Activated B cell treated with CpG ODN at 0.5 μM for 24 hours (primary cell): ENCODE measurements at regions of chr16 and their contacts with region 1.

Region 1: DNA sequence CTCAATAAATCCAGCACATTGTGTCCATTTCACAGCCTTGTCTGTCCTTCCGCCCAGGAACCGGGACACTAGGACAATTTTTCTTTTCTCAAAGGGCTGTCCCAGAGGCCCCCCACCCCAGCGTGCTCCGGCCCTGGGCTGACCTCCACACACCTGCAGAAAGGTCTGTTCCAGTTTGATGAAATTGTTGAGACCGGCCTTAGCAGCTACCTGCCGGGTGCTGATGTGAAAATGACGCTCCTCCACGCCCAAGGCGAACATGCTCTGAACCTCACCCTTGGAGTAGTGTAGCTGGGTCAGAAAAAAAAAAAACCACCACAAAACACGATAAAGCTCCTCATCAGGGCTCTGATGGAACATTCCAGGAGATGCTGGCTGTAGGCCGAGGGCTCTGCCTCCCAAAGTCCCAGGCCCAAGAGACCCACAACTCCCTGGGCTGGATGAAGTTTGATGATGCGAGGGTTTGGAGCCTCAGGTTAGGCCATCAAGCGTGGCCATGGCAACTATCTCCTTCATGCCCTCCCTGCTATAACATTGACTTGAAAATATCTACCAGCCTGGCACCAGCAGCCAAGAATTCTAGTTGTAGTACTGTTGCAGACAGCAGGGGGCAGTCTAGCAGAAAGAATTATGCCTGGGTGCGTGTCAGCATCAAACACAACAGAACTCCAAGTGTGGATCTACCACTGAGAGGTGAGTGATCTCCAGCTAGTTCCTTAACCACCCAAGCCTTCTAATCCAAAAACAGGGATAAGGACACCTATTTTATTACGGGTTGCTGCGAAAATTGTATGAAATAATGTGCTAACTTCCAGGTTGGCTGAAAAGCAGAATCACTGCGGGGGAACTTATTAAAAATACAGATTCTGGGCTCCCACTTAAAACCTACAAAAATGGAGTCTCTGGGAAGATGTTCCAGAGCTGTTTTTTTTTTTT is 62.1 kb downstream of the RMI2 start:
- DNase-seq: no peak
- ATAC-seq: peak; percentile 74
- H3K4me3 Mint-ChIP-seq: no peak overlapping the region
- H3K27ac Mint-ChIP-seq: no peak overlapping the region
- H3K4me1 Mint-ChIP-seq: no peaks in the 10 kb centered on the region
- H3K27me3 Mint-ChIP-seq: no peaks in the 10 kb centered on the region
- CTCF ChIP-seq: no peak

Region 2: GRCh38 chr16:11390918-11391495 is 16.3 kb before region 1 on chr16:
- CTCF ChIA-PET with region 1: interaction called, 4 read pairs
- POLR2A ChIA-PET with region 1: interaction called, 15 read pairs
- intact Hi-C with region 1: no loop called
- DNase-seq: no peak
- ATAC-seq: no peak
- H3K4me3 Mint-ChIP-seq: no peak overlapping the region
- H3K27ac Mint-ChIP-seq: no peak overlapping the region
- H3K4me1 Mint-ChIP-seq: peaks cover 2% of the 10 kb centered on the region
- H3K27me3 Mint-ChIP-seq: peaks cover 8% of the 10 kb centered on the region
- CTCF ChIP-seq: no peak

Region 3: DNA sequence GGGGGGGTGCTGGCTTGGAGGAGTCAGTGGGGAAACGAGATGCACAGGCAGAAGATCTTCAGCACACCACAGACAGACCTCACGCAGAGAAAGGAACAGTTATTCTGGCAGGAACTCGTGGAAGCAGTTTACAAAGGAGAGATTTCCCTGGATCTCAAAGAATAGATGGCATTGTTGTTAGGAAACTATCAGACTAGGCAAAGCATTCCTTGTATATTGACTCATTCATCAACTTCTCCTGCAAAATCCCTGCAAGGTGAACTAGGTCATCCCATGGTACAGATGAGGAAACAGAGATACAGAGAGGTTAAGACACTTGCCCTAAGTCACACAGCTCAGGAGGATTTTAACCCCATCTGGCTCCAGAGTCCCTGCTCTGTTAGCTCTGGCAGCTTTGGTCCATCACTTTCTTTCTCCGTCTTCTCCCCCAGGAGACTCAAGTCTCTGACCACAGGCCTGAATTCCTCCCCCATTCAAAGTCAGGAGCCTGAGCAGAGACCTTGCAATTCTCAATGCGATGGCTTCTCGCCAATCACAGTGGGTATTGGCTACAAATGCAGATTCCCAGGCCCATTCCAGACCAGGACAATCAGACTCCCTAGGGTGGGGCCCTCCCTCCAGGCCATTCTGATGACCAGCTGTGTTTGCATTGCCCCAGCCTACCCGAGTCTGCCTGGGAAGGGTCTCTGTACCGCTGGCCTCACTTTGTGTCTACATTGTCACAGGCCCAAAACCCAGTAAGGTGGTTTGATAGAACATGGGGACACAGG is 123.0 kb after region 1 on chr16:
- CTCF ChIA-PET with region 1: interaction called, 25 read pairs
- POLR2A ChIA-PET with region 1: no interaction called
- intact Hi-C with region 1: loop called (anchors 1 kb)
- DNase-seq: no peak
- ATAC-seq: no peak
- H3K4me3 Mint-ChIP-seq: no peak overlapping the region
- H3K27ac Mint-ChIP-seq: no peak overlapping the region
- H3K4me1 Mint-ChIP-seq: no peaks in the 10 kb centered on the region
- H3K27me3 Mint-ChIP-seq: peaks cover 6% of the 10 kb centered on the region
- CTCF ChIP-seq: no peak

Region 4: GRCh38 chr16:11639925-11640899 is 232.9 kb after region 1 on chr16:
- CTCF ChIA-PET with region 1: interaction called, 20 read pairs
- POLR2A ChIA-PET with region 1: no interaction called
- intact Hi-C with region 1: loop called (anchors 1 kb)
- DNase-seq: no peak
- ATAC-seq: no peak
- H3K4me3 Mint-ChIP-seq: no peak overlapping the region
- H3K27ac Mint-ChIP-seq: no peak overlapping the region
- H3K4me1 Mint-ChIP-seq: peaks cover 8% of the 10 kb centered on the region
- H3K27me3 Mint-ChIP-seq: no peaks in the 10 kb centered on the region
- CTCF ChIP-seq: no peak